MCF 10A (cell line): ENCODE measurements at regions of chr14 and their contacts with region 1.

Region 1: GRCh38 chr14:85528080-85528896 is 1.7 kb upstream of the FLRT2 start:
- DNase-seq: peak; percentile 88
- H3K4me3 Mint-ChIP-seq: peak overlapping the region; percentile 86
- H3K27ac Mint-ChIP-seq: peak overlapping the region; percentile 73
- H3K4me1 Mint-ChIP-seq: peaks cover 23% of the 10 kb centered on the region
- H3K27me3 Mint-ChIP-seq: no peaks in the 10 kb centered on the region
- CTCF ChIP-seq: peak; percentile 73

Region 2: GRCh38 chr14:84006643-84007155 is 1521.6 kb before region 1 on chr14:
- CTCF ChIA-PET with region 1: no interaction called
- POLR2A ChIA-PET with region 1: no interaction called
- intact Hi-C with region 1: loop called (anchors 5 kb)
- DNase-seq: peak; percentile 65
- H3K4me3 Mint-ChIP-seq: no peak overlapping the region
- H3K27ac Mint-ChIP-seq: no peak overlapping the region
- H3K4me1 Mint-ChIP-seq: peaks cover 9% of the 10 kb centered on the region
- H3K27me3 Mint-ChIP-seq: no peaks in the 10 kb centered on the region
- CTCF ChIP-seq: peak; percentile 16

Region 3: DNA sequence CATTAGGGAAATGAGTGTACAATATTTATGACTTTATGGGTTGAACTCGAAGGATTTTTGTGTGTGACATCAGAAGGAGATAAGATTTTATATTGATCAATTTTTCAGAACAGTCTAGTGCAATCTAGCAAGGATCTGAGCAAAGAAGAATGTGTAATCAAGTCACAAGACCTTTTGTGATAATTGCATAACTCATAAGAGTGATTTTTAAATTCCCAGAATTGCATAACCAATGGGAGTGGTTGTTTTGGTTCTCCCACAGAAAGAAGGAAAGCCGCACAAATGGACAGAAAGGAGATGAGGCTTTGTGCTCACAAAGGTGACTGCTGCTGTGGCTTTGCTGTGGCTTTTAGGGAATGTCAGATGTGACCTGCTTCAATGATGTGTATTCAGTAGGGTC is 440.1 kb before region 1 on chr14:
- CTCF ChIA-PET with region 1: interaction called, 3 read pairs
- POLR2A ChIA-PET with region 1: interaction called, 8 read pairs
- intact Hi-C with region 1: loop called (anchors 5 kb)
- DNase-seq: peak; percentile 77
- H3K4me3 Mint-ChIP-seq: no peak overlapping the region
- H3K27ac Mint-ChIP-seq: peak overlapping the region; percentile 71
- H3K4me1 Mint-ChIP-seq: peaks cover 17% of the 10 kb centered on the region
- H3K27me3 Mint-ChIP-seq: no peaks in the 10 kb centered on the region
- CTCF ChIP-seq: no peak

Region 4: GRCh38 chr14:85233756-85234155 is 294.5 kb before region 1 on chr14:
- CTCF ChIA-PET with region 1: interaction called, 9 read pairs
- POLR2A ChIA-PET with region 1: interaction called, 47 read pairs
- intact Hi-C with region 1: loop called (anchors 1 kb)
- DNase-seq: peak; percentile 79
- H3K4me3 Mint-ChIP-seq: peak overlapping the region; percentile 71
- H3K27ac Mint-ChIP-seq: peak overlapping the region; percentile 75
- H3K4me1 Mint-ChIP-seq: peaks cover 23% of the 10 kb centered on the region
- H3K27me3 Mint-ChIP-seq: no peaks in the 10 kb centered on the region
- CTCF ChIP-seq: no peak

Region 5: DNA sequence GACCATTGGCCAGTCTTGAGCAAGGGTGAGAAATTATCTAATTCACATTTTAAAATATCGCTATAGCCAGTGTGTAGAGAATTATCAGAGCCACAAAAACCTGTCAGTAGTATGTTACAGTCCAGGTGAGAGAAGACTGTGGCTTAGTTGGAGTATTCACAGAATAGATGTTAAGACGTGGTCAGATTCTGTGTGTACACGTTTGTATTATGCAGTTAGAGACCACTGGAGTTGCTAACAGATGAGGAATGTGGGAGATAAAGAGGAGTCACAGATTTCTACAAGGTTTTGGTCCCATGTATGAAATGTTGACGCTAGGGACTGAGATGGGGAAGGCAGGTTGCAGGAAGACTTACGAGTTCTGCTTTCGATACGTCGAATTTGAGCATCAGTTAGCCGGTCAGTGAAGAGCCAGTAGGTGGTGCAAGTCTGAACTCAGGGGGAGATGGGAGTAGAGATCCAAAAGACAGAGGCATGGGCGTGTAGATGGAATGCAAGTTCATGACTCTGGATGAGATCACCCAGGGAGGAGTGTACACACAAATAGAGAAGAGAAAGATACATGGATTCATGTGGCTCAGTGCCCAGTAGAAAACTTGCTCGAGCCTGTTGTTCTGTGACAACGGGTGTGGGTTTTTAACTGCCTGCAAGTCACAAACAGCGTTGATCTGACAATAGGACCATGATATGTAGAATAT is 113.1 kb before region 1 on chr14:
- CTCF ChIA-PET with region 1: interaction called, 13 read pairs
- POLR2A ChIA-PET with region 1: interaction called, 60 read pairs
- intact Hi-C with region 1: loop called (anchors 1 kb)
- DNase-seq: peak; percentile 99
- H3K4me3 Mint-ChIP-seq: peak overlapping the region; percentile 60
- H3K27ac Mint-ChIP-seq: peak overlapping the region; percentile 32
- H3K4me1 Mint-ChIP-seq: peaks cover 33% of the 10 kb centered on the region
- H3K27me3 Mint-ChIP-seq: no peaks in the 10 kb centered on the region
- CTCF ChIP-seq: peak; percentile 46

Region 6: DNA sequence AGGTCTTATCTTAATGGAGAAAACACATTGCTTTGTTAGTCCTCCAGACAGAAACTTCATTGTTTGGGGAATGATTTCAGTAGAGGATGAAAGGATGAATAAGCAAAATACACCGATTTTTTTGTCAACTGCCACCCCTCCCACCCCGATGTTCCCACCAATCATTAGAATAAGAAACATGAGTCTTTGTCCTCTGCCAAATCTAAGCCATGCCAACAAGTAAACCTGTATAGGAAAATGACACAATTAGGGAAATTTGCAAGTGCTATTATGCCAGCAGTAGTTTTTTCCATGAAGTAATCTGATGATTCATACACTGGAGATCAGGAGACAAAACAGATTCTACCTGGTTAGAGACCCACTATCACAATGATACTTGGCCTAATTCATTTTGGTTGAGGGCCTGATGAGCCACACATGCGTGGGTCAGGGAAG is 37.6 kb after region 1 on chr14:
- CTCF ChIA-PET with region 1: interaction called, 3 read pairs
- POLR2A ChIA-PET with region 1: interaction called, 11 read pairs
- intact Hi-C with region 1: no loop called
- DNase-seq: peak; percentile 86
- H3K4me3 Mint-ChIP-seq: peak overlapping the region; percentile 35
- H3K27ac Mint-ChIP-seq: peak overlapping the region; percentile 94
- H3K4me1 Mint-ChIP-seq: peaks cover 18% of the 10 kb centered on the region
- H3K27me3 Mint-ChIP-seq: no peaks in the 10 kb centered on the region
- CTCF ChIP-seq: no peak

Region 7: DNA sequence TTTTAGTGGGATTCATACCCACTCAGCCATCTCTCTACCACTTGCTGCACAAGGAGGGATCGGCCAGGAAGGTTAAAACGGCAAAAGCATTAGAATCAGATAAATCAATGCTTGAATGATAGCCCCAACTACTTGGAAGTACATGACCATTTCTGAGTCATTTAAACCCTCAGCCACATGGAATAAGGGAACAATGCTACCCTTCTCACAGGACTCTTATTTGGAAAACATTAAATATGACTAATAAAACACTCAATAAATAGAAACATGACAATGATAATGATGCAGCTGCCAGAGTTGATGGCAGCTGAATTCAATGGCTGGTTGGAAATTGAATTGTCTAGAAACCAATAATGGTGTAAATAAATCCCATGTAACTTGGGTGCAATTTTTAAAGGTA is 167.0 kb after region 1 on chr14:
- CTCF ChIA-PET with region 1: no interaction called
- POLR2A ChIA-PET with region 1: no interaction called
- intact Hi-C with region 1: no loop called
- DNase-seq: no peak
- H3K4me3 Mint-ChIP-seq: no peak overlapping the region
- H3K27ac Mint-ChIP-seq: no peak overlapping the region
- H3K4me1 Mint-ChIP-seq: no peaks in the 10 kb centered on the region
- H3K27me3 Mint-ChIP-seq: no peaks in the 10 kb centered on the region
- CTCF ChIP-seq: no peak

Region 8: GRCh38 chr14:86057018-86057667 is 528.9 kb after region 1 on chr14:
- CTCF ChIA-PET with region 1: interaction called, 13 read pairs
- POLR2A ChIA-PET with region 1: interaction called, 9 read pairs
- intact Hi-C with region 1: loop called (anchors 1 kb)
- DNase-seq: peak; percentile 55
- H3K4me3 Mint-ChIP-seq: no peak overlapping the region
- H3K27ac Mint-ChIP-seq: no peak overlapping the region
- H3K4me1 Mint-ChIP-seq: no peaks in the 10 kb centered on the region
- H3K27me3 Mint-ChIP-seq: no peaks in the 10 kb centered on the region
- CTCF ChIP-seq: peak; percentile 75